ENCODE measurements at regions of chr15 and their contacts with region 1.

Region 1: GRCh38 chr15:40593588-40594428 is at the start of gene KNL1:
- DNase-seq: peak; percentile 96
- ATAC-seq: peak; percentile 82
- H3K4me3 ChIP-seq: peak within 1 kb of the TSS; percentile 63 to 92 (median 80)
- H3K4me3 Mint-ChIP-seq: peak within 1 kb of the TSS; percentile 96
- H3K27ac ChIP-seq: peak within 1 kb of the TSS; percentile 89 to 92
- H3K27ac Mint-ChIP-seq: peak within 1 kb of the TSS; percentile 99
- H3K4me1 ChIP-seq: peaks cover 10 to 22% of the 10 kb centered on the region in 2 donors
- H3K4me1 Mint-ChIP-seq: peaks cover 23% of the 10 kb centered on the region
- H3K27me3 ChIP-seq: no peaks in the 10 kb centered on the region
- H3K27me3 Mint-ChIP-seq: no peaks in the 10 kb centered on the region
- CTCF ChIP-seq: no peak
- total RNA-seq, gene KNL1: 3.7 and 4.0 TPM in 2 replicates

Region 2: DNA sequence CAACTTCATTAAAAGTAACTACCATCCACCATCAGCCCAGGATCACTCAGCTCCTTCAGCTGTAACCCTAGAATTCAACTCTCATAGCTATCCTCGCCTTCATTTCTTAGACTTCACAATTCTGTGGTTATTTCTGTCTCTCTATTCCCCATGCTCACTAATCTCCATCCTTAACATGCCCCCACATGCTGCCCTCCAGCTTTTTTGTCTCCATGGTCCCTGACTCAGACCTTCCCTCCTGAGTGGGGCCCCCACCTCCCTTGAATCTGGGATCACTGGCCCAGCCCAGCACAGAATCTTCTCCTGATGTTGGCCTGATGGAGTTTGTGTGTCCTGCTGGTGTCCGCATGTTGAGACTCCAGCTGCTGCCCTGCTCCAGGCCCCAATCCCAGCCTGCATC is 81.4 kb before region 1 on chr15:
- CTCF ChIA-PET with region 1: interaction called, 54 read pairs
- POLR2A ChIA-PET with region 1: interaction called, 3 read pairs
- intact Hi-C with region 1: no loop called
- DNase-seq: no peak
- ATAC-seq: no peak
- H3K4me3 ChIP-seq: no peak overlapping the region
- H3K4me3 Mint-ChIP-seq: peak overlapping the region; percentile 98
- H3K27ac ChIP-seq: no peak overlapping the region
- H3K27ac Mint-ChIP-seq: peak overlapping the region; percentile 68
- H3K4me1 ChIP-seq: peaks cover 12 to 18% of the 10 kb centered on the region in 2 donors
- H3K4me1 Mint-ChIP-seq: peaks cover 25% of the 10 kb centered on the region
- H3K27me3 ChIP-seq: peaks cover 0 to 7% (median 2%) of the 10 kb centered on the region in 4 experiments
- H3K27me3 Mint-ChIP-seq: peaks cover 8% of the 10 kb centered on the region
- CTCF ChIP-seq: no peak

Region 3: DNA sequence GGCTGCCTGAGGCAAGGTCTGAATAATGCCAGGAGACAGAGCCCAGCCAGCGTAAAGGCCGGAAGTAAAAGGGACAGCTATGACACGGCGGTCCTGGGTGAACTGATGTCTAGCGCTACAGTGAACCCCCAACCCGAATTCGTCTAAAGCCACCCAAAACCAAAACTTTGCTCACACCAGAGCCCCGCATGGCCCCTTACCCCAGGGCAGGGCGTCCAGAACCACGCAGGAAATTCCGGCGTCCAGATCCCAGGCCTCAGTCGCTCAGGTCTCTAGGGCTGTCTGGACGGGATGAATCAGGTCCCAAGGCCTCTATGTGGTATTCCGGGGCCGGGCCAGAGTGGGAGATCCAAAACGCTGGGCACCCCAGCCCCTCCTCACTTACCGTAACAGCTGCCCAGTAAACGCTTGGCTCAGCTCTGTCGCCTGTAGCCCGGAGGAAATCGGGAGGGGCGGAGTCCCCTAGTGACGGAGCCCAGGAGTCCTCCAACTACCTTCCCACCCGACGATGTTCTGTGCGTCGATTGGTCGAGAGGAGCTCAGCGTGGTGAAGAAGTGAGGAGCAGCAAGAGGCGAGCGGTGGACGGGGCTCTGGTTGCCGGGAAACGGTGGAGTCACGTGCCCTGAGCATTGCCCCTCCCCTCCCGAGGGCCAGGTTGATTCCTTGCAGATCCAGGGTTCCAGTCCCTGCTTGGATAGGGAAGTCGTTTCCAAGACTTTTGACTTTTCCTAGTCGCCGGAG is 29.0 kb before region 1 on chr15 and contains the start of gene CCDC32:
- CTCF ChIA-PET with region 1: interaction called, 32 read pairs
- POLR2A ChIA-PET with region 1: interaction called, 7 read pairs
- intact Hi-C with region 1: loop called (anchors 1 kb)
- DNase-seq: peak; percentile 96
- ATAC-seq: peak; percentile 90
- H3K4me3 ChIP-seq: peak within 1 kb of the TSS; percentile 81 to 100 (median 89)
- H3K4me3 Mint-ChIP-seq: peak within 1 kb of the TSS; percentile 82
- H3K27ac ChIP-seq: peak within 1 kb of the TSS; percentile 87 to 97
- H3K27ac Mint-ChIP-seq: peak within 1 kb of the TSS; percentile 86
- H3K4me1 ChIP-seq: peaks cover 50 to 55% of the 10 kb centered on the region in 2 donors
- H3K4me1 Mint-ChIP-seq: peaks cover 62% of the 10 kb centered on the region
- H3K27me3 ChIP-seq: no peaks in the 10 kb centered on the region
- H3K27me3 Mint-ChIP-seq: no peaks in the 10 kb centered on the region
- CTCF ChIP-seq: no peak
- total RNA-seq, gene CCDC32: 76.6 and 78.4 TPM in 2 replicates

Region 4: DNA sequence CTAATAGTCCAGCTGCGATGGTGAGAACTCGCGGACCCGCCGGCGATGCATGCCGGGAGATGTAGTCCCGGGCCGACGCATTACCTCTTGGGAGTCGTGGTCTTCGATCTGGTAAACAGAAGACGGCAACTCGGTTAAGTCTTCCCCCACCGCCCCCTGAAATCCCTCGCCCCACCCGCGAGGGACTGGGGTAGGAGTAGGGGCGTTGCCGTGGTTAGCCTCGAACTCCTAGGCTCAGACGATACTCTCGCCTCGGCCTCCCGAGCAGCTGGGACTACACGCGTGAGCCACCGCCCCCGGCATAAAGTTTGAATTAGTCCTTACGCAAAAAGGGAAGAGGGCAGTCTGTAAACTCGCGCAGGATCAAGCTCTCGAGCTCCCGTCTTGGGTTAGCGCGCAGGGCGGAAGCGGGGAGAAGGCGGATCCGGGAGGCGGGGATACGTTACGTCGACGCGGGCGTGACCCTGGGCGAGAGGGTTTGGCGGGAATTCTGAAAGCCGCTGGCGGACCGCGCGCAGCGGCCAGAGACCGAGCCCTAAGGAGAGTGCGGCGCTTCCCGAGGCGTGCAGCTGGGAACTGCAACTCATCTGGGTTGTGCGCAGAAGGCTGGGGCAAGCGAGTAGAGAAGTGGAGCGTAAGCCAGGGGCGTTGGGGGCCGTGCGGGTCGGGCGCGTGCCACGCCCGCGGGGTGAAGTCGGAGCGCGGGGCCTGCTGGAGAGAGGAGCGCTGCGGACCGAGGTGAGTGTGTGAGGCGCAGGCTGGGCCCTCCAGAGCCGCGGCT is 101.1 kb after region 1 on chr15 and contains the start of gene RAD51:
- CTCF ChIA-PET with region 1: interaction called, 11 read pairs
- POLR2A ChIA-PET with region 1: interaction called, 6 read pairs
- intact Hi-C with region 1: loop called (anchors 1 kb)
- DNase-seq: peak; percentile 96
- ATAC-seq: peak; percentile 88
- H3K4me3 ChIP-seq: peak within 1 kb of the TSS; percentile 84 to 100 (median 87)
- H3K4me3 Mint-ChIP-seq: peak within 1 kb of the TSS; percentile 100
- H3K27ac ChIP-seq: peak within 1 kb of the TSS; percentile 93 to 94
- H3K27ac Mint-ChIP-seq: peak within 1 kb of the TSS; percentile 99
- H3K4me1 ChIP-seq: peaks cover 7 to 18% of the 10 kb centered on the region in 2 donors
- H3K4me1 Mint-ChIP-seq: peaks cover 25% of the 10 kb centered on the region
- H3K27me3 ChIP-seq: no peaks in the 10 kb centered on the region
- H3K27me3 Mint-ChIP-seq: no peaks in the 10 kb centered on the region
- CTCF ChIP-seq: no peak
- total RNA-seq, gene RAD51: 1.9 and 2.0 TPM in 2 replicates

Region 5: DNA sequence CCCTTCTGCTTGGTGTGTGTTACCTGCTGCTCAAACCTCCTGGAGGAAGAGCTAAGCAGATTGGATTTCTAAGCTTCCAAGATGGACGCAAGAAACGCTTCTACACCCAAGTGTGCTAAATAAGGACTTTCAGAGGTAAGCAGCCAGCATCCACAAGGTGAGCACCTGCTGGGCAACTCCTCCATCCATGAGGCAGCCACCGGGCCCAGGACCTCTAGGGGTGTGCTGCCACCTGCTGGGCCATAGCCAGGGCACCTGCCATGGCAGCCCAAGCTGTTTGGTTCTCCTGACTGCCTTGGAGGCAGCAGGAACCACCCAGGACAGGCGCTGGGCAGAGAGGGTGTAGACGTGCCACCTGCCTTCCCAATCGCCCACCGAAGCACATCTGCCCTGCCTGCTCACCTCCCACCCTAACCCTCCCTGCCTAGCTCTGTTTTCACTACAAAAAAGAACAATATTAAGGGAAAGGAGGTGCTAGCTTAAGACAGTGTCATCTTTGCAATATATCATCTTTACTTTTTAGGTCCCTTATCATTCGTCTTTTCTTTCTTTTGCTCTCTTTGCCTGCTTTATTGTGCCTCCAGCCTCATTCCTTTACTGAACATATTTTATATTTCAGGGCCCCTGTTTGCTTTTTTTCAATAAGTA is 188.9 kb after region 1 on chr15:
- CTCF ChIA-PET with region 1: interaction called, 56 read pairs
- POLR2A ChIA-PET with region 1: no interaction called
- intact Hi-C with region 1: loop called (anchors 1 kb)
- DNase-seq: peak; percentile 84
- ATAC-seq: peak; percentile 98
- H3K4me3 ChIP-seq: no peak overlapping the region
- H3K4me3 Mint-ChIP-seq: no peak overlapping the region
- H3K27ac ChIP-seq: no peak overlapping the region
- H3K27ac Mint-ChIP-seq: peak overlapping the region; percentile 43
- H3K4me1 ChIP-seq: peaks cover 7% of the 10 kb centered on the region in 2 donors
- H3K4me1 Mint-ChIP-seq: peaks cover 16% of the 10 kb centered on the region
- H3K27me3 ChIP-seq: no peaks in the 10 kb centered on the region
- H3K27me3 Mint-ChIP-seq: no peaks in the 10 kb centered on the region
- CTCF ChIP-seq: peak; percentile 90

Region 6: DNA sequence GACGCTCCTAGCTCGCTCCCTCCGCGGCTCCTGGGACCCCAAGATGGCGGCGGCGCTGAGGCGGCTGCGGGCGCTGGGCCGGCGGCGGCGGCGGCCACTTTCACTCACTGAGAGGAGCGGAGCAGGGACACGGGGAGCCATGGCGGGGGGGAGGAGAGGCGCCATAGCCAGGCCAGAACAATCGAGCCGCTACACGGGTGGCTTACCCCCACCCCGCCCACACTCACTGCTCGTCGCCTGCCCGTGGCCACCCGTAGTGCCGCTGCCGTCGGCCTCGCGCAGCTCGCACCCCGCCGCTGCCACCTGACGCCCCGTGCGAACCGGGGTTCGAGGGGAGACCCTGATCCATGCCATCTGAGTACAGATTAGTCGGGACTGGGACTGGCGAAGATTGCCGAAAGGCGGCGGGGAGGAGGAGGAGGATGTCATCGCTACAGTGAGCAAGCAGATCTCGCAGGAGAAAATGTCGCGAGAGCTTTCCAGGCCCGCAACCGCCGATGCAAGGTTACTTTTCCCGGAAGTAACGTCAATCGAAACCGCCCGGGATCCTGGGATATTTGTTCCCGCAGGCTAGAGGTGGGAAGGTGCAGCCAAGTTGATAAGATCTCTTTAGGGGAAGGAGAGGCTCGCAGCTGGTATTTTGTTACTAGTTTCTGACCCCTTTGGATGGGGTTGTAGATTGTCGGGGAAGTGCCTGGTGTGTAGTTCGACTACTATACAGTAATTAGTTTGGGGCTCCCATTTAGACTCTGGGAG is 522.5 kb after region 1 on chr15 and contains the start of gene INO80:
- CTCF ChIA-PET with region 1: no interaction called
- POLR2A ChIA-PET with region 1: no interaction called
- intact Hi-C with region 1: loop called (anchors 2 kb)
- DNase-seq: peak; percentile 98
- ATAC-seq: peak; percentile 66
- H3K4me3 ChIP-seq: peak within 1 kb of the TSS; percentile 73 to 92 (median 80)
- H3K4me3 Mint-ChIP-seq: peak within 1 kb of the TSS; percentile 100
- H3K27ac ChIP-seq: peak within 1 kb of the TSS; percentile 93
- H3K27ac Mint-ChIP-seq: peak within 1 kb of the TSS; percentile 100
- H3K4me1 ChIP-seq: peaks cover 16 to 17% of the 10 kb centered on the region in 2 donors
- H3K4me1 Mint-ChIP-seq: peaks cover 26% of the 10 kb centered on the region
- H3K27me3 ChIP-seq: no peaks in the 10 kb centered on the region
- H3K27me3 Mint-ChIP-seq: no peaks in the 10 kb centered on the region
- CTCF ChIP-seq: no peak
- total RNA-seq, gene INO80: 55.7 and 57.8 TPM in 2 replicates

Measured in B cell (primary cell).